ENCODE measurements at regions of chr1 and their contacts with region 1.

Region 1: GRCh38 chr1:164858101-164858632 is 299.2 kb downstream of the PBX1 start:
- DNase-seq: peak; percentile 48
- H3K4me3 ChIP-seq: no peak overlapping the region
- H3K27ac ChIP-seq: no peak overlapping the region
- H3K4me1 ChIP-seq: no peaks in the 10 kb centered on the region
- H3K27me3 ChIP-seq: no peaks in the 10 kb centered on the region
- CTCF ChIP-seq: no peak
- POLR2A ChIP-seq: no peak

Region 2: GRCh38 chr1:164794310-164794709 is 63.9 kb before region 1 on chr1:
- intact Hi-C with region 1: loop called (anchors 10 kb)
- DNase-seq: peak; percentile 70
- H3K4me3 ChIP-seq: no peak overlapping the region
- H3K27ac ChIP-seq: peak overlapping the region; percentile 55 to 70
- H3K4me1 ChIP-seq: peaks cover 5% of the 10 kb centered on the region
- H3K27me3 ChIP-seq: no peaks in the 10 kb centered on the region
- CTCF ChIP-seq: no peak
- POLR2A ChIP-seq: no peak

Region 3: DNA sequence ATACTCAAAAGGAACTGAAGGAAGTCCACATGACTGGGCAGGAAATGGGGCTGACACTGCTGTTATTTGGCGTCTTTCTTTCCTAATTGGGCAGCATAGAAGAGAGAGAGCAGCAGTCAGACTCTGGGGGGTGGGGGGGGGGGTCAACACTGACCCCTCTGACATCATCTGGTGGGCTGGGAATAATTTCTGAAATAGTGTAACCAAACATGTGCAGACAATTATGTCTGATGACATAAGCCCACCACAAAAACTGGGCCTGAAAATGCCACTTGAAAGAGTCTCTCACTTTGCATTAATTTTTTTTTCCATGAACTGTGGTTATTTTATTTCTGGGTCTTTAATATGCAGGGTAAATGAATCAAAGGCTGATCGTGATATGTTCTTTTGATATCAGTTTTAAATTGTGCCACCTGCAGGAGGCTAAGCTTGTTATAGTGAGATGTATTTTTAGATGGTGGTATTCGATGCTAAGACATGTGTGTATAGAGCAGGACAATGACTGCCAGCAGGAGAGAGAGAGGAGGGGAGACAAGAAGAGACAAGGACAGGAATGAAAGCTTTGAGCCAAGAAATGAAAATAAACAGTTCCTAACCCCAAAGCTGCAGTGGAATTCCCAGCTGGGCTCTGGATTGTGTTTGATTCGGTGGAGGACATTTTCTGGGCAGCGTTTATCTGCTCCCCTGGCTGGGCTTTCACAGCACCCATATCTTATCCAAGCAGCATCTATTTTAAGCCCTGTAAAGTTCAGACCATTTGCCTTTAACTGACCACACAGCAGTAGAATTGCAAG is 34.5 kb before region 1 on chr1:
- intact Hi-C with region 1: loop called (anchors 5 kb)
- DNase-seq: peak; percentile 32
- H3K4me3 ChIP-seq: no peak overlapping the region
- H3K27ac ChIP-seq: no peak overlapping the region
- H3K4me1 ChIP-seq: no peaks in the 10 kb centered on the region
- H3K27me3 ChIP-seq: no peaks in the 10 kb centered on the region
- CTCF ChIP-seq: peak in 1 of 4 experiments; percentile 21
- POLR2A ChIP-seq: no peak

Region 4: DNA sequence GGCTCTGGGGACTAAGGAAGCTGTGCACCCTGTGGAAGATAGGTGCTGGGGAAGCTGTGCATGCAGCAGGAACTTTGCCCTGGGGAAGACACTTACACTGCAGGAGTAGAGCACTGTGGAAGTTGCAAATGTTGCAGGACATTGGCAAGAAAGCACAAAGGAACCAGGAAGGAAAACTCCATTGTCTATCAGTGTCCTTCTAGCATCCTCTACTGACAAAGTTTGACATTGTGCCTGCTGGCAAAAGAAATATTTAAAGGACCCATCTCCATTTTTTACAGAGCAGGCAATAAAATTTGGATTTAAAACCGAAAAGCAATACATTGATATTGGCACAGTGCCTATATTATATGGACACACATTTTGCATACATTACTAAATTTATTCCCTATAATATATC is 94.9 kb after region 1 on chr1:
- intact Hi-C with region 1: loop called (anchors 10 kb)
- DNase-seq: no peak
- H3K4me3 ChIP-seq: no peak overlapping the region
- H3K27ac ChIP-seq: no peak overlapping the region
- H3K4me1 ChIP-seq: no peaks in the 10 kb centered on the region
- H3K27me3 ChIP-seq: no peaks in the 10 kb centered on the region
- CTCF ChIP-seq: no peak
- POLR2A ChIP-seq: no peak